ENCODE measurements at regions of chr10 and their contacts with region 1.

Region 1: GRCh38 chr10:33559105-33559504 is 224.6 kb upstream of the NRP1 start:
- DNase-seq: no peak
- H3K4me3 ChIP-seq: no peak overlapping the region
- H3K27ac ChIP-seq: no peak overlapping the region
- H3K4me1 ChIP-seq: no peaks in the 10 kb centered on the region
- H3K27me3 ChIP-seq: no peaks in the 10 kb centered on the region
- CTCF ChIP-seq: no peak
- POLR2A ChIP-seq: no peak

Region 2: GRCh38 chr10:33584569-33584968 is 25.5 kb after region 1 on chr10:
- intact Hi-C with region 1: loop called (anchors 2 kb)
- DNase-seq: no peak
- H3K4me3 ChIP-seq: no peak overlapping the region
- H3K27ac ChIP-seq: no peak overlapping the region
- H3K4me1 ChIP-seq: no peaks in the 10 kb centered on the region
- H3K27me3 ChIP-seq: no peaks in the 10 kb centered on the region
- CTCF ChIP-seq: no peak
- POLR2A ChIP-seq: no peak

Measured in breast epithelium (tissue), 4 donors.